Motor neuron (in vitro differentiated cells): ENCODE measurements at regions of chr1 and their contacts with region 1.

Region 1: DNA sequence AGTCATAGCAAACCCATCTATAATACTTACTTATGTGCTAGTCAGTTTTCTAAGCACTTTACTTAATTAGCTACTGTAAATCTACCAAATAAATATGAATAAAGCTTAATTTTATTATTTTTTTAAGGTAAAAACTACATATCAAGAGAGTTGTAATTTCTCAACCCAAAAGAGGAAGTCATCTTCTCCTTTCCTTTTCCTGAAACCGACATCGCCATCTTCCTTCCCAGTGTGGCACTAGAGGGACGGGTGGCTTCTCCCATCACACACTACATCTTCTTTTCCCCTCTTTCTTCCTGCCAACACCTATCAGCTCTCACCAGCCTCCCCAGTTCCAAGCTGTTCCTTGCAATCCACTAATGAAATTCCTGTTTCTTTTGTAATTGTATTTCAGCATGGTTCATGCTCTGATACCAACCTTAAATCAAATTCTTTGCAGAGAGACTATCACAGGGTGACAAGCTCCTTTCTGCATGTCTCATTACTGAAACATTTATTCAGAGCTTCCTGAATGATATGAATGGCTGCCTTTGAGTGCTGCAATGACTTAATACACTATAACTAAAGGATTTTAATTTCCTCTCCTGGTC is 251.6 kb upstream of the FAM78B start:
- ATAC-seq: peak in 5 of 8 experiments; percentile 56 to 96 (median 76)
- H3K4me3 ChIP-seq: no peak overlapping the region
- H3K27ac ChIP-seq: no peak overlapping the region
- H3K4me1 ChIP-seq: no peaks in the 10 kb centered on the region

Region 2: GRCh38 chr1:166166695-166167571 is 251.5 kb before region 1 on chr1 and contains the start of gene FAM78B:
- in situ Hi-C with region 1: loop called in 1 of 9 experiments (anchors 25 kb)
- ATAC-seq: peak; percentile 33 to 86 (median 80)
- H3K4me3 ChIP-seq: peak within 1 kb of the TSS; percentile 81 to 99 (median 95)
- H3K27ac ChIP-seq: peak within 1 kb of the TSS; percentile 60 to 80
- H3K4me1 ChIP-seq: peaks cover 5 to 8% of the 10 kb centered on the region in 2 donors
- total RNA-seq, gene FAM78B: 2.2 to 7.9 (median 4.9) TPM